ENCODE measurements at regions of chr20 and their contacts with region 1.

Region 1: GRCh38 chr20:3420211-3420707 is 12.8 kb upstream of the DNAAF9 start:
- DNase-seq: peak; percentile 88
- H3K4me3 Mint-ChIP-seq: peak overlapping the region; percentile 50
- H3K27ac Mint-ChIP-seq: peak overlapping the region; percentile 83
- H3K4me1 Mint-ChIP-seq: peaks cover 9% of the 10 kb centered on the region
- H3K27me3 Mint-ChIP-seq: peaks cover 12% of the 10 kb centered on the region

Region 2: GRCh38 chr20:3383878-3384495 is 36.3 kb before region 1 on chr20:
- intact Hi-C with region 1: loop called (anchors 1 kb)
- DNase-seq: no peak
- H3K4me3 Mint-ChIP-seq: no peak overlapping the region
- H3K27ac Mint-ChIP-seq: peak overlapping the region; percentile 72
- H3K4me1 Mint-ChIP-seq: peaks cover 12% of the 10 kb centered on the region
- H3K27me3 Mint-ChIP-seq: peaks cover 7% of the 10 kb centered on the region

Region 3: GRCh38 chr20:3407771-3408637 is 12.3 kb before region 1 on chr20:
- intact Hi-C with region 1: loop called (anchors 1 kb)
- DNase-seq: peak; percentile 91
- H3K4me3 Mint-ChIP-seq: peak overlapping the region; percentile 91
- H3K27ac Mint-ChIP-seq: peak overlapping the region; percentile 90
- H3K4me1 Mint-ChIP-seq: peaks cover 30% of the 10 kb centered on the region
- H3K27me3 Mint-ChIP-seq: peaks cover 41% of the 10 kb centered on the region

Region 4: DNA sequence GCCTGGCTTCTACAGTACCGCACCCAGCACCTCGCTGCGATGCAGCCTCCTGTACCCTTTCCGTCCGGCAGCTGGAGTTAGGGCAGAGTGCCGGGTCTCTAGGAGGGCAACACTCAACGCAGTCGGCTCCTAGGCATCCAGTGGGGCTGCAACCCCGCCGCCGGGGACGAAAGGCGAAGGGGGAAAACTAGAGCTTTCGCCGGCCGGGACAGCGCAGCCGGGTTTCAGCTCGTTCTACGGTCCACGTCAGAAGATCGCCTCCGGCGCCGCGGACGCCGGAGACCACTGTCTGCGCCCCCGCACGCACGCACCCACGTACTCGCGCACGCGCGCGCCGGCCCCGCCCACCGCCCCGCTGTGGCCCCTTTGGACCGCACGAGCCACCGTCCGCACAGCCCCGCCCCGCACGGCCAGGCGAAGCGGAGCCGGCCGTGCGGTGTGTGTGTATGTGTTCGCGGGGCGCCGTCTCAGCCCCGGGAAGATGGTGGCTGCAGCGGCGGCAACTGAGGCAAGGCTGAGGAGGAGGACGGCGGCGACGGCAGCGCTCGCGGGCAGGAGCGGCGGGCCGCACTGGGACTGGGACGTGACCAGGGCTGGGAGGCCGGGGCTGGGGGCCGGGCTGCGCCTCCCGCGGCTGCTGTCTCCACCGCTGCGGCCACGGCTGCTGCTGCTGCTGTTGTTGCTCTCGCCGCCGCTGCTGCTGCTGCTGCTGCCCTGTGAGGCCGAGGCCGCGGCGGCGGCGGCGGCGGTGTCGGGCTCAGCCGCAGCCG is 50.6 kb after region 1 on chr20 and contains the start of gene ATRN:
- intact Hi-C with region 1: loop called (anchors 1 kb)
- DNase-seq: peak; percentile 97
- H3K4me3 Mint-ChIP-seq: peak within 1 kb of the TSS; percentile 95
- H3K27ac Mint-ChIP-seq: peak within 1 kb of the TSS; percentile 79
- H3K4me1 Mint-ChIP-seq: peaks cover 26% of the 10 kb centered on the region
- H3K27me3 Mint-ChIP-seq: peaks cover 15% of the 10 kb centered on the region
- total RNA-seq, gene ATRN: 11.8 and 12.1 TPM in 2 replicates

Region 5: DNA sequence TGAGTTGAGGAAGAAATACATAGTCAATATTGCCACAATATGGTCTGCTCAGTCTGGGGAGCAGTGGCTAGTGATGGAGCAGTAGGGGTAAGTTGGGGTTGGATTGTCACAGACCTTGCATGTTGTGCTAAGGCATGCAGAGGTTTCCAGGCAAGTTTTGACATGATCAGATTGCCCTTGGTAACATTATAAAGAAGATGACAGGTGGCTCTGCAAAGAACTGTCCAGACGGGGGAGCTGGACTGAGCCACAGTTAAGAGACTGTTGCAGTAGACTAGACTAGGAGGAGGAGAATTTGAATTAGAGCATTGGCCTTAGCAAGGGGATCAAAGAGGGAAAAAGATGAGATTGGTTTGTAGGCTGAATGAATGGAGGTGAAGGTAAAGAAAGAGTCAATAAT is 74.0 kb after region 1 on chr20:
- intact Hi-C with region 1: no loop called
- DNase-seq: no peak
- H3K4me3 Mint-ChIP-seq: no peak overlapping the region
- H3K27ac Mint-ChIP-seq: no peak overlapping the region
- H3K4me1 Mint-ChIP-seq: no peaks in the 10 kb centered on the region
- H3K27me3 Mint-ChIP-seq: no peaks in the 10 kb centered on the region

Region 6: GRCh38 chr20:3767427-3768341 is 347.4 kb after region 1 on chr20 and contains the start of gene ADISSP:
- intact Hi-C with region 1: no loop called
- DNase-seq: peak; percentile 99
- H3K4me3 Mint-ChIP-seq: peak within 1 kb of the TSS; percentile 81
- H3K27ac Mint-ChIP-seq: peak within 1 kb of the TSS; percentile 97
- H3K4me1 Mint-ChIP-seq: peaks cover 22% of the 10 kb centered on the region
- H3K27me3 Mint-ChIP-seq: peaks cover 9% of the 10 kb centered on the region
- total RNA-seq, gene ADISSP: 62.9 and 68.8 TPM in 2 replicates